Keratinocyte (primary cell): ENCODE measurements at regions of chr1 and their contacts with region 1.

Region 1: DNA sequence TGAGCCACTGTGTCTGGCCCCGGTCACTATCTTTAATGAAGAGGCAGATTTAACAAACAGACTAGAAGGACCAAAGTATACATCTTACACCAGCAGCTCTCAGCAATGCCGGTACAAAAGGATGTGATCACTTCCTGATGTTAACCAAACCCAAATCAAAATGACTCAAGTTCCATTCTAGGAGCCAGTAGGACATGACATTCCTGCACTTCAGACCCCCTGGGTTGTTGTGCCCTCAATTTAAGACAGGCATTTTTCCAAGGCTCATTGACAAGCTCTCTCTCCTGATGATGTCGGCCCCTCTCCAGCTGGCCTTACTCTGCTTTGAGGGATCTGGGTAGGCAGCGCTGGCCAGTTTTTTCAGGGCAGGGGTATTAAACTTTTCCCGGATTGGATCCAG is 35.1 kb downstream of the YARS1 start:
- DNase-seq: no peak
- H3K4me3 ChIP-seq: no peak overlapping the region
- H3K27ac ChIP-seq: no peak overlapping the region
- H3K4me1 ChIP-seq: peaks cover 16% of the 10 kb centered on the region
- H3K27me3 ChIP-seq: no peaks in the 10 kb centered on the region
- CTCF ChIP-seq: no peak

Region 2: DNA sequence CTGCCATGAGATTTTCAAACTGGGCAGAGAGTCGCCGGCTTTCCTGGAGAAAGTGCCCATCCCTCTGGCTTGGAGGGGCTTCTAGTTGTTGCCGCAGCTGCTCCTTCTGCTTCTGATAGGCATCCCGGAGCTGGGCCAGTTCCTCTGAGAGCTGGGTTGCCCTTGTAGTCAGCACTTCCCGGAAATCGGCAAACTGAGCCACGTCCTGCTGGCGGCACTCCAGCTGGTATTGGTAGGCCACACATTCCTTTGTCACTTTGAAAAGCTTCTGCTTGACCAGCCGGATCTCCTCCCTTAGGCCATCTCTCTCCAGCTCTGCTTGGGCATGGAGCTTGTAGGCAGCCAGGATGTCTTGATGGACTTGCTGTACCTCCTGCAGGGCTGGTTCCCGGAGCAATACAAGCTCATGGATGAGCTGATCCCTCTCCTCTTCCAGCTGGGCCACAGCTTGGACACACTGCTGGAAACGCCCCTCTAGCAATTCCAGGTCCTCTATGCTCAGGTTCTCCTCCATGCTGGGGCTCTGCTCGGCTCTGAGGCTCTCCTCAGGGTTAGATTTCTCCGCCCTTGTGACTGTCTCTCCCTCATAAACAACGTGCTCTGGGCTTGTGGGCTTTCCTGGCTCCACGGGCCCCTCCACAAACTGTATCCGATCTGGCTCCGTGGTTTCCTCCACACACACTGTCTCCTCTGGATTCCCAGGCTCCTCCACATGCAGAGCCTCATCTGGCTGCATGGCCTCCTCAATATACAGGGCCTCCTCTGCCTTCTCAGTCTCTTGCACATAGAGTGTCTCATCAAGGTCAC is 86.8 kb before region 1 on chr1:
- dilution Hi-C with region 1: no loop called
- DNase-seq: no peak
- H3K4me3 ChIP-seq: no peak overlapping the region
- H3K27ac ChIP-seq: no peak overlapping the region
- H3K4me1 ChIP-seq: no peaks in the 10 kb centered on the region
- H3K27me3 ChIP-seq: no peaks in the 10 kb centered on the region
- CTCF ChIP-seq: no peak

Region 3: DNA sequence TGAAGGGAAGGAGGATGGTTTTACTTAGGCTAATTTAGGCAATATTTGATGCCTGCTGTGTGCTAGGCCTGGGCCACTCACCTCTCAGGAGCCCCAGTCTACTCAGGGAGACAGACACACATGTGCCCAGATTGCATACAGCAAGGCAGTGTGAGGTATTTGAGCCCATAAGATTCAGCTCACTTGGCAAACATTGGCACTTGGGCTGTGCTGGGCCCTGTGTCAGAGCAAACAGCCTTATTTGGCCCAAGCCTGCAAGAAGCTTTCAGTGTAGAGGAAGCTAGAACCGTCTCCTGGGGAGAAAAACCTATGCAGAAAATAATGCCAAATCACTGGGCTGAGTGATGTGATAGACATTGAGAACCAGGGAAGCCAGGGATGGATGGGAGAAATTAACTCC is 75.6 kb before region 1 on chr1:
- dilution Hi-C with region 1: loop called (anchors 5 kb)
- DNase-seq: no peak
- H3K4me3 ChIP-seq: no peak overlapping the region
- H3K27ac ChIP-seq: no peak overlapping the region
- H3K4me1 ChIP-seq: peaks cover 21% of the 10 kb centered on the region
- H3K27me3 ChIP-seq: no peaks in the 10 kb centered on the region
- CTCF ChIP-seq: no peak

Region 4: GRCh38 chr1:32964461-32965250 is 182.6 kb after region 1 on chr1 and contains the start of gene RNF19B:
- dilution Hi-C with region 1: no loop called
- DNase-seq: peak; percentile 56
- H3K4me3 ChIP-seq: peak within 1 kb of the TSS; percentile 86 to 100 (median 96)
- H3K27ac ChIP-seq: peak within 1 kb of the TSS; percentile 86
- H3K4me1 ChIP-seq: peaks cover 33% of the 10 kb centered on the region
- H3K27me3 ChIP-seq: no peaks in the 10 kb centered on the region
- CTCF ChIP-seq: no peak
- polyA plus RNA-seq, gene RNF19B: 31.8 to 48.3 TPM (median 33.5 TPM) in 3 replicates